ENCODE measurements at regions of chr1 and their contacts with region 1.

Region 1: GRCh38 chr1:109667452-109668122 is at the start of gene GSTM2:
- DNase-seq: peak; percentile 49 to 87 (median 82)
- ATAC-seq: peak; percentile 100
- H3K4me3 ChIP-seq: peak within 1 kb of the TSS; percentile 52
- H3K4me3 Mint-ChIP-seq: peak within 1 kb of the TSS; percentile 75 to 92 (median 84)
- H3K27ac ChIP-seq: peak within 1 kb of the TSS; percentile 49
- H3K27ac Mint-ChIP-seq: peak within 1 kb of the TSS; percentile 38 to 90 (median 77)
- H3K4me1 ChIP-seq: peaks cover 0 to 11% of the 10 kb centered on the region in 2 donors
- H3K4me1 Mint-ChIP-seq: peaks cover 17 to 30% (median 24%) of the 10 kb centered on the region in 7 donors
- H3K27me3 ChIP-seq: no peaks in the 10 kb centered on the region
- H3K27me3 Mint-ChIP-seq: no peaks in the 10 kb centered on the region
- total RNA-seq, gene GSTM2: 52.2 to 201 (median 109) TPM

Region 2: GRCh38 chr1:109620841-109621286 is 46.7 kb before region 1 on chr1:
- CTCF ChIA-PET with region 1: no interaction called
- POLR2A ChIA-PET with region 1: no interaction called
- intact Hi-C with region 1: loop called in 1 of 2 experiments (anchors 1 kb)
- DNase-seq: peak; percentile 92 to 98 (median 95)
- ATAC-seq: peak; percentile 90
- H3K4me3 ChIP-seq: peak overlapping the region; percentile 78
- H3K4me3 Mint-ChIP-seq: peak overlapping the region; percentile 90 to 98 (median 94)
- H3K27ac ChIP-seq: peak overlapping the region; percentile 90
- H3K27ac Mint-ChIP-seq: peak overlapping the region; percentile 92 to 98 (median 96)
- H3K4me1 ChIP-seq: peaks cover 14 to 43% of the 10 kb centered on the region in 2 donors
- H3K4me1 Mint-ChIP-seq: peaks cover 52 to 79% (median 68%) of the 10 kb centered on the region in 7 donors
- H3K27me3 ChIP-seq: no peaks in the 10 kb centered on the region
- H3K27me3 Mint-ChIP-seq: no peaks in the 10 kb centered on the region

Region 3: DNA sequence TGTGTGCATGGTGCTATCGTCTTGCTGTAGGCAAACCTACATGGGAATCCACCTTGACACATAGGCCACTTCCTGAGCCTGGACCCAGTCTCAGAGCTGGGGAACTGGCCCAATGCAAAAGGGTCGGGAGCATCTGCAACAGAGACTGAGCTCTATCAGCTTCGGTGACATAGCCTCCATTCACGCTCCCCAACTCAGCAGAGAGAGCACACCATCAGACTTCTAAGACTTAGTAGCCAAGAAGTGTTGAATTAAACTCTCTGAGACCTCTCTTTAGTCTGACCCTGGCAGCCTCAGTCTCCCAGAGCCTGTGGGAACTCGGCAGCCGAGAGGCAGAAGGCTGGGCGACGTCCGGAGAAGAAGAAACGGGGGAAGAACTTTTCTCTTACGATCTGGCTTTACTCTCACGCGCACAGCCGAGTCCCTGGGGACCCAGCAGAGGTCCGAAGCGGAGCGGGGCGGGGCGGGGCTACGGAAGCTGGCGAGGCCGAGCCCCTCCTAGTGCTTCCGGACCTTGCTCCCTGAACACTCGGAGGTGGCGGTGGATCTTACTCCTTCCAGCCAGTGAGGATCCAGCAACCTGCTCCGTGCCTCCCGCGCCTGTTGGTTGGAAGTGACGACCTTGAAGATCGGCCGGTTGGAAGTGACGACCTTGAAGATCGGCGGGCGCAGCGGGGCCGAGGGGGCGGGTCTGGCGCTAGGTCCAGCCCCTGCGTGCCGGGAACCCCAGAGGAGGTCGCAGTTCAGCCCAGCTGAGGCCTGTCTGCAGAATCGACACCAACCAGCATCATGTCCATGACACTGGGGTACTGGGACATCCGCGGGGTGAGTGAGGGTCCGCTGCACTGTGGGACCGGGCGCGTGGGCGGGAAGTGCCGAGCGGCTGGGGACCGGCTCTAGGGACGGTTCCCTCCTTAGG is 11.7 kb before region 1 on chr1 and contains the start of gene GSTM4:
- CTCF ChIA-PET with region 1: interaction called, 4 read pairs
- POLR2A ChIA-PET with region 1: interaction called, 5 read pairs
- intact Hi-C with region 1: loop called in 1 of 2 experiments (anchors 1 kb)
- DNase-seq: peak in 8 of 9 donors; percentile 18 to 76 (median 38)
- ATAC-seq: peak; percentile 88
- H3K4me3 ChIP-seq: peak within 1 kb of the TSS; percentile 89
- H3K4me3 Mint-ChIP-seq: peak within 1 kb of the TSS; percentile 87 to 96 (median 94)
- H3K27ac ChIP-seq: peak within 1 kb of the TSS; percentile 67
- H3K27ac Mint-ChIP-seq: peak within 1 kb of the TSS; percentile 76 to 94 (median 87)
- H3K4me1 ChIP-seq: peaks cover 6 to 9% of the 10 kb centered on the region in 2 donors
- H3K4me1 Mint-ChIP-seq: peaks cover 10 to 36% (median 24%) of the 10 kb centered on the region in 7 donors
- H3K27me3 ChIP-seq: no peaks in the 10 kb centered on the region
- H3K27me3 Mint-ChIP-seq: peaks cover 0 to 28% (median 0%) of the 10 kb centered on the region in 5 donors
- total RNA-seq, gene GSTM4: 14.2 to 28.4 (median 16.1) TPM

Region 4: DNA sequence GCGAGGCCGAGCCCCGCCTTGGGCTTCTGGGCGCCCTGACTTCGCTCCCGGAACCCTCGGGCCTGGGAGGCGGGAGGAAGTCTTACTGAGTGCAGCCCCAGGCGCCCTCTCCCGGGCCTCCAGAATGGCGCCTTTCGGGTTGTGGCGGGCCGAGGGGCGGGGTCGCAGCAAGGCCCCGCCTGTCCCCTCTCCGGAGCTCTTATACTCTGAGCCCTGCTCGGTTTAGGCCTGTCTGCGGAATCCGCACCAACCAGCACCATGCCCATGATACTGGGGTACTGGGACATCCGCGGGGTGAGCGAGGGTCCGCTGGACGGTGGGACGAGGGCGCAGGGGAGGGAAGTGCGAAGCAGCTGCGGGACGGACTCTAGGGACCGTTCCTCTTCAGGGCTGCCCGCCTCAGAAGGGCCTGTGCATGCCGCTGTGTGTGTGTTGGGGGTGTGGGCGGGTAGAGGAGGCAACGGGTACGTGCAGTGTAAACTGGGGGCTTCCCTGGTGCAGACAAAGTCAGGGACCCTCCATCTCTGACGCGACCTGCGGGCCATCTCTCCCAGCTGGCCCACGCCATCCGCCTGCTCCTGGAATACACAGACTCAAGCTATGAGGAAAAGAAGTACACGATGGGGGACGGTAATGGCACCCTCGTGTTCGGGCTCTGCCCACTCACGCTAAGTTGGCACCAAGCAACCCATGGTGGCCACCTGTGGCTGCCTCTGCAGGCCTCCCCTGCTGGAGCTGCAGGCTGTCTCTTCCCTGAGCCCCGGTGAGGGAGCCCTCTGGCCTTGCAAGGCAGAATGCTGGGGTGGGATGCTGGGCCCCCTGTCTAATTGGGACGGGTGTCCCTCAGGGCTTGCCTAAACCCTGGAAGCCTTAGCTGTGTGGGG is 20.3 kb after region 1 on chr1 and contains the start of gene GSTM1:
- CTCF ChIA-PET with region 1: no interaction called
- POLR2A ChIA-PET with region 1: no interaction called
- intact Hi-C with region 1: loop called in 1 of 2 experiments (anchors 2 kb)
- DNase-seq: peak in 5 of 9 donors; percentile 74 to 89 (median 82)
- ATAC-seq: no peak
- H3K4me3 ChIP-seq: no peak within 1 kb of the TSS
- H3K4me3 Mint-ChIP-seq: peak within 1 kb of the TSS in 7 of 10 donors; percentile 81 to 99 (median 90)
- H3K27ac ChIP-seq: peak within 1 kb of the TSS; percentile 70
- H3K27ac Mint-ChIP-seq: peak within 1 kb of the TSS in 6 of 9 donors; percentile 88 to 96 (median 94)
- H3K4me1 ChIP-seq: no peaks in the 10 kb centered on the region
- H3K4me1 Mint-ChIP-seq: peaks cover 0 to 27% (median 8%) of the 10 kb centered on the region in 7 donors
- H3K27me3 ChIP-seq: no peaks in the 10 kb centered on the region
- H3K27me3 Mint-ChIP-seq: no peaks in the 10 kb centered on the region
- total RNA-seq, gene GSTM1: 45.9 to 83.6 TPM in 2 of 5 experiments, not detected in the others

Region 5: GRCh38 chr1:109704173-109704572 is 36.6 kb after region 1 on chr1:
- CTCF ChIA-PET with region 1: no interaction called
- POLR2A ChIA-PET with region 1: interaction called, 5 read pairs
- intact Hi-C with region 1: loop called in 1 of 2 experiments (anchors 5 kb)
- DNase-seq: no peak
- ATAC-seq: no peak
- H3K4me3 ChIP-seq: no peak overlapping the region
- H3K4me3 Mint-ChIP-seq: no peak overlapping the region
- H3K27ac ChIP-seq: no peak overlapping the region
- H3K27ac Mint-ChIP-seq: no peak overlapping the region
- H3K4me1 ChIP-seq: no peaks in the 10 kb centered on the region
- H3K4me1 Mint-ChIP-seq: peaks cover 0 to 1% (median 0%) of the 10 kb centered on the region in 7 donors
- H3K27me3 ChIP-seq: no peaks in the 10 kb centered on the region
- H3K27me3 Mint-ChIP-seq: peaks cover 0 to 12% (median 0%) of the 10 kb centered on the region in 5 donors

Region 6: DNA sequence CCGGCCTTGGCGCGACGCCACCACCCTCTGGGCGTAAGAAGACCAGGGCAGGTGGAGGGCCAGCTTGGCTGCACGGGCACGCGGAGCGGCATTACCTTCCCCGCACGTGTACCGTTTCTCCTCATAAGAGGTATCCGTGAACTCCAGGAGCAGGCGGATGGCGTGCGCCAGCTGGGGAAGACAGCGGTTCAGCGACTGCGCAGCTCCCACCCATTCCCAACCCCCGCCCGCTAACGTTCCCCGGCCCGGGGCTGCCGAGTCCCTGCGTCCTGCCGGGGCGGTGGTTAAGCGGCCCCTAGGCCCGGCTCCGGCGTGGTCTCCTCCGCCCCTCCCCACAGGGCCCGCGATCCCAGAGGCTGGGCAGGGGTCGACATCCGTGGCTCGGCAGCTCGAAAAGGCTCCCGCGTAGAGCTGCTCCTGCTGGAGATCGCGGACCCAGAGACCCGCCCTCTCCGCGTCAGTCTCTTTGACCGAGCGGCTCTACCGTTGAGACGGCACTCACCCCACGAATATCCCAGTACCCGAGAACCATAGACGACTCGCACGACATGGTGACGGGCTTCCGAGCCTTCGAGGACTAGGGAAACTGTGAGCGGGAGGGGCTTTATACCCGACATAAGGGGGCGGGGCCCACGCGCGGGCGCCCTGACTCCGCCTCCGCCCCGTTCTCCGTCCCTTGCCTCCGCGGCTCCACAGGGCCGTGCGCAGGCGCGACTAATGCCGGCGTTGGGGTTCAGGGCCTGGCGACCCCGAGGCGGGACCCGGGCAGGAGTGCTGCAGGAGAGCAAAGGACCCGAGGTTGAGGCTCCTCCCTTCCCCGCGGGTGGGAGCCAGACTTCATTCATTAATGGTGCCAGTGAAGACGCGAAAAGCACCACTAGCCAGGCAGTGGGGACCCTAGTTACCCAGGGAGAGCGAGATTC is 72.4 kb after region 1 on chr1:
- CTCF ChIA-PET with region 1: no interaction called
- POLR2A ChIA-PET with region 1: no interaction called
- intact Hi-C with region 1: loop called (anchors 1 kb)
- DNase-seq: peak; percentile 73 to 87 (median 85)
- ATAC-seq: peak; percentile 99
- H3K4me3 ChIP-seq: peak overlapping the region; percentile 70
- H3K4me3 Mint-ChIP-seq: peak overlapping the region; percentile 71 to 93 (median 87)
- H3K27ac ChIP-seq: peak overlapping the region; percentile 81
- H3K27ac Mint-ChIP-seq: peak overlapping the region; percentile 17 to 95 (median 72)
- H3K4me1 ChIP-seq: peaks cover 0 to 11% of the 10 kb centered on the region in 2 donors
- H3K4me1 Mint-ChIP-seq: peaks cover 3 to 21% (median 13%) of the 10 kb centered on the region in 7 donors
- H3K27me3 ChIP-seq: no peaks in the 10 kb centered on the region
- H3K27me3 Mint-ChIP-seq: peaks cover 0 to 51% (median 0%) of the 10 kb centered on the region in 5 donors

Region 7: DNA sequence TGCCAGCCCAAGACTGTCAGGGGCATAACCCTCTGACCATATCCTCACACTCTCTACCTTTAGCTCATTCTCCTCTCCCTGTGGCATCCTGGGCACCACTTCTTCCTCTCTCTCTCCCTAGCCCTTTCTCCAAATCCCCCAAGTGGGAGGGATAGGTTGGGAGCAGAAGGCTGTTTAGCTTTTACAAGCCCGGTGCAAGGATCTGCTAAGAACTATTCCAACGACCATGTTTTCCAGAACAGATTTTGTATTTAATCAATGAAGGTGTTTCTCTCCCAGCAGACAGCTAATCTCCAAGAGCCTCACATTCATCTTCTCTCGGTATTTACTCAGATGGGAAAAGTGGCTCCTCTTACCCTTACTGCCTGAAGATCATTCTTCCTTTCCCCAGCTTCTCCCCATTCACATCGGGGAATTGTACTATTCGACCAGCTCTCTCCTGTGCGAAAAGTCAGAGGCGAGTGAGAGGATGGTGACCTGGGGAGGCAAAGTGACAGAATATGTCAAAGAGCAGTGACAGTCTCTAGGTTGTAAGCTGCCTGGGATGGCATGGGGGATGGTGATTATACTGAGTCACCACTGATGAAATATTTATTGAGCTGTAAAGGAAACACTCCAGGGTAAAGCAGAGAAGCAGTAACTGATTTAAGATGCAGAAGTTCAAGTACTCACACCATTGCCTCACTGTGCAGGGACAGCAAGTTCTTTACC is 624.6 kb after region 1 on chr1:
- CTCF ChIA-PET with region 1: no interaction called
- POLR2A ChIA-PET with region 1: no interaction called
- intact Hi-C with region 1: no loop called
- DNase-seq: no peak
- ATAC-seq: peak; percentile 44
- H3K4me3 ChIP-seq: no peak overlapping the region
- H3K4me3 Mint-ChIP-seq: no peak overlapping the region
- H3K27ac ChIP-seq: no peak overlapping the region
- H3K27ac Mint-ChIP-seq: no peak overlapping the region
- H3K4me1 ChIP-seq: no peaks in the 10 kb centered on the region
- H3K4me1 Mint-ChIP-seq: peaks cover 0 to 5% (median 0%) of the 10 kb centered on the region in 7 donors
- H3K27me3 ChIP-seq: no peaks in the 10 kb centered on the region
- H3K27me3 Mint-ChIP-seq: peaks cover 0 to 10% (median 0%) of the 10 kb centered on the region in 5 donors

Measured in naive thymus-derived CD4-positive, alpha-beta T cell (primary cell).